Spleen (tissue), 13 donors: ENCODE measurements at regions of chrX and their contacts with region 1.

Region 1: DNA sequence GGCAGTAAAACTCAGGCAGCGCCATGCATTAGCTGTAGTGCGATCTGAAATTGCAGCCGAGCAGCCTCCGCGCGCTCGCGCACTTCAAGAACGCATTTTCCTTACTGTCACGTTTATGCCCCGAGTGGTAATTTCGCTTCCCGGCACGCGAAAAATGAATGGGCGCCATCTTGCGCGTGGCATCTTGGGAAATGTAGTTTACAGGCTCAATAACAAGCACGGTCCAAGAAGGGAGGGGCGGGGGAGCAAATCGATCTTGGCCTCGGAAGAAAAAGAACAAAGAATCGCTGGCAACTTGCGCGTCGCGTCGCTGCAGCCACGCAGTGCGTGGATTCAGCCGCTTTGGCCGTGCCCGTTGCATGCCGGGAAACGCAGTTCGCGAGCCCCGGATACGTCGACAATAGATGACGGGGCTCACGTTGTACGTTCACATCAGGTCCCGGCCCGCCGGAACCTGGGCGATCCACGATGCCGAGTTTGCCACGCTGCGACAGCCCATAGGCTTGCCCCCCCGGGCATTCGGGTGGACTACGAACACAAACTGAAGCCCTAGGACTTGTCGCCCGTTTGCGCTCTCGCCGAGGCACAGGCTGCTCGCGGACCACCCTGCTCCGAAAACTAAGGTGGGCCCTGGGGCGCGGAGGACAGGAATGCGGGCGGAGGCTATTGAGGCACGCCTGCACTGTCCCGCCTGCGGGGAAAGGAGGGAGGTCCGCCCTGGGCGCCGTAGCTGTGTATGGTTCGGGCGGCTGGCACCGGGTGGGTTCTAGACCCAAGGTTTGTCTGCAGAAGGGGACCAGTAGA is at the start of gene FTSJ1:
- DNase-seq: peak; percentile 96
- H3K4me3 ChIP-seq: peak within 1 kb of the TSS; percentile 36 to 73 (median 54)
- H3K27ac ChIP-seq: peak within 1 kb of the TSS; percentile 67 to 90 (median 85)
- H3K4me1 ChIP-seq: peaks cover 0 to 26% (median 11%) of the 10 kb centered on the region in 6 donors
- H3K27me3 ChIP-seq: no peaks in the 10 kb centered on the region
- CTCF ChIP-seq: no peak
- POLR2A ChIP-seq: no peak
- total RNA-seq, gene FTSJ1: 27.1 to 58.6 (median 38.5) TPM

Region 2: GRCh38 chrX:48083212-48083611 is 392.8 kb before region 1 on chrX:
- intact Hi-C with region 1: loop called (anchors 10 kb)
- DNase-seq: no peak
- H3K4me3 ChIP-seq: no peak overlapping the region
- H3K27ac ChIP-seq: no peak overlapping the region
- H3K4me1 ChIP-seq: peaks cover 0 to 4% (median 0%) of the 10 kb centered on the region in 6 donors
- H3K27me3 ChIP-seq: no peaks in the 10 kb centered on the region
- CTCF ChIP-seq: peak in 10 of 11 experiments; percentile 17 to 65 (median 59)
- POLR2A ChIP-seq: no peak